Sigmoid colon (tissue), 7 donors: ENCODE measurements at regions of chr19 and their contacts with region 1.

Region 1: GRCh38 chr19:48363810-48364563 is at the starts of genes SYNGR4 and TMEM143:
- DNase-seq: peak; percentile 100
- H3K4me3 ChIP-seq: peak within 1 kb of the TSS; percentile 48 to 70 (median 62)
- H3K27ac ChIP-seq: peak within 1 kb of the TSS; percentile 81 to 99 (median 96)
- H3K4me1 ChIP-seq: peaks cover 0 to 12% (median 8%) of the 10 kb centered on the region in 4 donors
- H3K27me3 ChIP-seq: no peaks in the 10 kb centered on the region
- CTCF ChIP-seq: no peak
- EP300 ChIP-seq: peak in 1 of 4 donors; percentile 29
- POLR2A ChIP-seq: peak; percentile 35 to 59
- total RNA-seq, gene SYNGR4: not detected
- total RNA-seq, gene TMEM143: 5.4 to 8.9 (median 6.8) TPM

Region 2: GRCh38 chr19:48391107-48391986 is 27.4 kb after region 1 on chr19 and contains the start of gene KDELR1:
- intact Hi-C with region 1: loop called (anchors 1 kb)
- DNase-seq: peak; percentile 89
- H3K4me3 ChIP-seq: peak within 1 kb of the TSS; percentile 74 to 98 (median 90)
- H3K27ac ChIP-seq: peak within 1 kb of the TSS; percentile 87 to 94 (median 93)
- H3K4me1 ChIP-seq: peaks cover 0 to 36% (median 30%) of the 10 kb centered on the region in 4 donors
- H3K27me3 ChIP-seq: peaks cover 26 to 45% (median 43%) of the 10 kb centered on the region in 3 donors
- CTCF ChIP-seq: peak in 3 of 4 experiments; percentile 68 to 93 (median 75)
- EP300 ChIP-seq: no peak
- POLR2A ChIP-seq: peak; percentile 64 to 70
- total RNA-seq, gene KDELR1: 61.5 to 109 (median 71.1) TPM